CD14-positive monocyte (primary cell): ENCODE measurements at regions of chr7 and their contacts with region 1.

Region 1: GRCh38 chr7:5822742-5823503 is 41.5 kb upstream of the RNF216 start:
- DNase-seq: peak; percentile 95 to 97 (median 96)
- H3K4me3 ChIP-seq: peak overlapping the region; percentile 64 to 89 (median 87)
- H3K4me3 Mint-ChIP-seq: peak overlapping the region; percentile 85 to 93
- H3K27ac ChIP-seq: peak overlapping the region; percentile 84 to 98
- H3K27ac Mint-ChIP-seq: peak overlapping the region; percentile 91 to 96 (median 95)
- H3K4me1 ChIP-seq: peaks cover 35 to 41% of the 10 kb centered on the region in 2 donors
- H3K4me1 Mint-ChIP-seq: peaks cover 39% of the 10 kb centered on the region
- H3K27me3 ChIP-seq: no peaks in the 10 kb centered on the region
- H3K27me3 Mint-ChIP-seq: peaks cover 0 to 4% (median 0%) of the 10 kb centered on the region in 3 donors
- CTCF ChIP-seq: no peak

Region 2: GRCh38 chr7:5776894-5777645 is 45.9 kb before region 1 on chr7:
- intact Hi-C with region 1: loop called in 1 of 2 experiments (anchors 5 kb)
- DNase-seq: no peak
- H3K4me3 ChIP-seq: no peak overlapping the region
- H3K4me3 Mint-ChIP-seq: peak overlapping the region in 1 of 2 donors; percentile 45
- H3K27ac ChIP-seq: peak overlapping the region in 1 of 2 donors; percentile 0
- H3K27ac Mint-ChIP-seq: peak overlapping the region in 4 of 7 donors; percentile 2 to 83 (median 22)
- H3K4me1 ChIP-seq: peaks cover 36 to 50% of the 10 kb centered on the region in 2 donors
- H3K4me1 Mint-ChIP-seq: peaks cover 60% of the 10 kb centered on the region
- H3K27me3 ChIP-seq: no peaks in the 10 kb centered on the region
- H3K27me3 Mint-ChIP-seq: peaks cover 0 to 1% (median 0%) of the 10 kb centered on the region in 3 donors
- CTCF ChIP-seq: no peak

Region 3: DNA sequence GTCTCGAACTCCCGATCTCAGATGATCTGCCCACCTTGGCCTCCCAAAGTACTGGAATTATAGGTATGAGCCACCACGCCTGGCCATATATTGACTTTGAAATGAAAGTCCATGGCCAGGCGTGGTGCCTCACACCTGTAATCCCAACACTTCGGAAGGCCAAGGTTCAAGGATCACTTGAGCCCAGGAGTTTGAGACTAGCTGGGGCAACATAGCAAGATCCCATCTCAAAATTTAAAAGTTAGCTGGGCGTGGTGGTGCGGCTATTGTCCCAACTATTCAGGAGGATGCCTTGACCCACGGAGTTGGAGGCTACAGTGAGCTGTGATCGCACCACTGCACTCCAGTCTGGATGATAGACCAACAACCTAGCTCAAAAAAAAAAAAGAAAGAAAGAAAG is 69.6 kb after region 1 on chr7:
- intact Hi-C with region 1: no loop called
- DNase-seq: no peak
- H3K4me3 ChIP-seq: no peak overlapping the region
- H3K4me3 Mint-ChIP-seq: no peak overlapping the region
- H3K27ac ChIP-seq: no peak overlapping the region
- H3K27ac Mint-ChIP-seq: no peak overlapping the region
- H3K4me1 ChIP-seq: no peaks in the 10 kb centered on the region
- H3K4me1 Mint-ChIP-seq: no peaks in the 10 kb centered on the region
- H3K27me3 ChIP-seq: no peaks in the 10 kb centered on the region
- H3K27me3 Mint-ChIP-seq: peaks cover 0 to 7% (median 2%) of the 10 kb centered on the region in 3 donors
- CTCF ChIP-seq: no peak